MCF 10A (cell line): ENCODE measurements at regions of chr17 and their contacts with region 1.

Region 1: DNA sequence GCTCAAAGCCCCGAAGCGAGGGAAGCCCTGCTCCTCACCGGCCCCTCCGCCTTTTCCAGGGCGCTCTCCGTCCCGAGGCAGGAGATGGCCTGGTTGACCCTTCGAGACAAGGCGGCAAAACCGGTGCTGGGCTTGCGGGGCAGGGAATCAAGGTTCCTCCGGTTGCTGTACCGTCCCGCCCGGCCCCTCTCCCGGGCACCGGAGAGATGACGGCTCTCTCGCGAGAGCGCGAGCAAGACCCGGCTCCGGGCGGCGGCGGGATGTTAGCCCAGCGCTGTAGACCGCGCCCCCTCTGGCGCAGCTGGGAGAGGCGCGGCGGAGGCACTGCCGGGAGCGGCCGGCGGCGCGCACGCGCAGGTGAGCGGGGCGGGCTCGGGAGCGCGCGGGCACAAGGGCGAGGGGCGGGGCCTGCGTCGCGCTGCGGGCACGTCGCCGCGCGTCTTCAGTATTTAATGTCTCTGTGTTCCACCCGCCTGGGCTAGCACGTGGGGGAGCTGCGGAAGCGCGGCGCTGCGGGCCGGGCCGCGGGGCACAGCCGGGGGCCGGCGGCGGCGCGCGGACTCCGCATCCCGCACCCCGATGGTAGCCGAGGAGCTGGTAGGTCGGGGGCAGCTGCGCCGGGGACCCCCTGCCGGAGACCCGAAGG is at the start of gene AKAP1:
- DNase-seq: peak; percentile 94
- H3K4me3 Mint-ChIP-seq: peak within 1 kb of the TSS; percentile 77
- H3K27ac Mint-ChIP-seq: peak within 1 kb of the TSS; percentile 81
- H3K4me1 Mint-ChIP-seq: peaks cover 19% of the 10 kb centered on the region
- H3K27me3 Mint-ChIP-seq: no peaks in the 10 kb centered on the region
- CTCF ChIP-seq: no peak
- total RNA-seq, gene AKAP1: 19.6 and 32.4 TPM in 2 replicates

Region 2: GRCh38 chr17:56833809-56834379 is 251.0 kb before region 1 on chr17 and contains the starts of genes C17orf67 and DGKE:
- CTCF ChIA-PET with region 1: no interaction called
- POLR2A ChIA-PET with region 1: interaction called, 9 read pairs
- intact Hi-C with region 1: loop called (anchors 10 kb)
- DNase-seq: peak; percentile 96
- H3K4me3 Mint-ChIP-seq: peak within 1 kb of the TSS; percentile 97
- H3K27ac Mint-ChIP-seq: peak within 1 kb of the TSS; percentile 66
- H3K4me1 Mint-ChIP-seq: peaks cover 47% of the 10 kb centered on the region
- H3K27me3 Mint-ChIP-seq: no peaks in the 10 kb centered on the region
- CTCF ChIP-seq: no peak
- total RNA-seq, gene C17orf67: 3.3 and 3.5 TPM in 2 replicates
- total RNA-seq, gene DGKE: 16.5 and 23.9 TPM in 2 replicates

Region 3: GRCh38 chr17:56985371-56986162 is 99.4 kb before region 1 on chr17:
- CTCF ChIA-PET with region 1: interaction called, 4 read pairs
- POLR2A ChIA-PET with region 1: interaction called, 77 read pairs
- intact Hi-C with region 1: loop called (anchors 10 kb)
- DNase-seq: no peak
- H3K4me3 Mint-ChIP-seq: no peak overlapping the region
- H3K27ac Mint-ChIP-seq: peak overlapping the region; percentile 14
- H3K4me1 Mint-ChIP-seq: peaks cover 13% of the 10 kb centered on the region
- H3K27me3 Mint-ChIP-seq: no peaks in the 10 kb centered on the region
- CTCF ChIP-seq: no peak

Region 4: DNA sequence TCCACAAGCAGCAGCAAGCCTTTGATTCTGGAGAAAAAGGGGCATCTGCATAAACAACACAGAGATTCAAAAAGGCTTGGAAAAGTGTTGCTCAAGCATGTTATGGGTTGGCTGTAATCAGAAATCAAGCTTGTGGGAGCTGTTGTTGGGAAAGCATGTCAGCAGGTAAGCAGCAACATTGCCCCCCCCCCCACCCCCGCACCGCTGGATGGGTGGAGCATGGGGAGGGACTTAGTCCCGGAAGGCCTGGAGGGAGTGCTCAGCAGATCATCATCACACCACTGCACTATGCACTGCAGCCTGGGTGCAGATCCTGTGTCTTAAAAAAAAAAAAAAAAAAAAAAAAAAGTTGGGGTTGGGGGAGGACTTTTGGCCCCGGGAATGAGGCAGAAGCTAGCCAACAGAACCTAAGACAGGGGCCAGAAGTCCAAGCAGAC is 16.7 kb before region 1 on chr17:
- CTCF ChIA-PET with region 1: interaction called, 3 read pairs
- POLR2A ChIA-PET with region 1: interaction called, 41 read pairs
- intact Hi-C with region 1: no loop called
- DNase-seq: peak; percentile 75
- H3K4me3 Mint-ChIP-seq: no peak overlapping the region
- H3K27ac Mint-ChIP-seq: no peak overlapping the region
- H3K4me1 Mint-ChIP-seq: no peaks in the 10 kb centered on the region
- H3K27me3 Mint-ChIP-seq: no peaks in the 10 kb centered on the region
- CTCF ChIP-seq: no peak

Region 5: GRCh38 chr17:57106107-57106835 is 21.3 kb after region 1 on chr17:
- CTCF ChIA-PET with region 1: interaction called, 4 read pairs
- POLR2A ChIA-PET with region 1: interaction called, 26 read pairs
- intact Hi-C with region 1: no loop called
- DNase-seq: peak; percentile 25
- H3K4me3 Mint-ChIP-seq: no peak overlapping the region
- H3K27ac Mint-ChIP-seq: no peak overlapping the region
- H3K4me1 Mint-ChIP-seq: peaks cover 28% of the 10 kb centered on the region
- H3K27me3 Mint-ChIP-seq: no peaks in the 10 kb centered on the region
- CTCF ChIP-seq: no peak